ENCODE measurements at regions of chr9 and their contacts with region 1.

Region 1: DNA sequence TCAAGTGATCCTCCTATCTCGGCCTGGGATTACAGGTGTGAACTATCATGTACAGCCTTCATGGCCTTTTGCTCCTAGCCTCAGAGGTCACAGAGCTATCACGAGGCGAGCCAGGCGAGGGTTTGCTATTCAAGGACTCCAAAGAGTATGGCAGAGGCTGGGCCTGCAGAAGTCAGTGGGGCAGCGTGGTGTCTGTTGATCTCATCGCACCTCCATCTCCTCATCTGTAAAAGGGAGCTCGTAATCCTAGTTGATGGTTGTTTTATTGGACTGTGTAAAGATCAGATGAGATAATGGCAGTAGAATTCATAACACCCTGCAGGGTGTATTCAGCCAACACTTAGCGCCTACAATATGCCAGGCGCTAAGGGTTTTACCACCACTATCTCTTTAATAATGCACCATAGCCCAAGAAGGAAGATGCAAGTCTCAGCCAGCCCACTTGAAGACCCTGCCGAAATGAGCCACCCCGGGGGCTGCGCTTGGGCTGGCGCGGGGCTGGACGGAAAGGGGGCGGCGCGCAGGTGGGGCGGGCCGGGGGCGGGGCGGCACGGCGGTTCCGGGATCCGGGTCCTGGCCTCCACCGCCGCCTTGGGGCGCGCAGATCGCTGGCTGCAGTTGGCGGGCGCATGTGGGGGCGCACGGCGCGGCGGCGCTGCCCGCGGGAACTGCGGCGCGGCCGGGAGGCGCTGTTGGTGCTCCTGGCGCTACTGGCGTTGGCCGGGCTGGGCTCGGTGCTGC is at the start of gene GALNT12:
- DNase-seq: no peak
- ATAC-seq: peak; percentile 81
- H3K4me3 ChIP-seq: peak within 1 kb of the TSS; percentile 41 to 47
- H3K27ac ChIP-seq: no peak within 1 kb of the TSS
- H3K4me1 ChIP-seq: 0 out of 2 replicates have a peak, but pooled peaks cover 3% of the 10 kb centered on the region
- H3K27me3 ChIP-seq: peaks cover 2% of the 10 kb centered on the region; the same call in 1 of the 2 replicates
- CTCF ChIP-seq: no peak
- total RNA-seq, gene GALNT12: 3.3 TPM

Region 2: DNA sequence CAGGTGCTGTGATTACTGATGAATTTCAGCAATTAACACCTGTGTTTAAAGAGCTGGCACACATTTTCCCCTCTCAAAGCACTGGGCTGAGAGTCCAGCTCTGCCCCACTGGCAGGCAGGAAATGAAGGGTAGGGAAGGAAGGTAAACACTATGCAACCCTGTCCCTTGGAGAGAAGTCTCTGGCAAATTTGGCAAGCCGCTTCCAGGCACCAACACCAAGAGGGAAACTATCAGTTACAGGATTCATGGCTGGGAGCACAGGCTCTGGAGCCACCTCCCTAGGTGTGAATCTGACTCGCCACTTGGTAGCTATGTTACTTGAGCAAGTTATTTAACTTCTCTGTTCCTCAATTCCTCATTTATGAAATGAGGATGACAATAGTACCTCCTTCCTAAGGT is 14.2 kb before region 1 on chr9:
- CTCF ChIA-PET with region 1: interaction called, 10 read pairs
- POLR2A ChIA-PET with region 1: no interaction called
- in situ Hi-C with region 1: no loop called
- intact Hi-C with region 1: no loop called
- DNase-seq: no peak
- ATAC-seq: no peak
- H3K4me3 ChIP-seq: no peak overlapping the region
- H3K27ac ChIP-seq: no peak overlapping the region
- H3K4me1 ChIP-seq: peaks cover 10% of the 10 kb centered on the region
- H3K27me3 ChIP-seq: no peaks in the 10 kb centered on the region
- CTCF ChIP-seq: no peak

Measured in Panc1 (cell line).